GM10248 (cell line): ENCODE measurements at regions of chr12 and their contacts with region 1.

Region 1: GRCh38 chr12:46071769-46072624 is 81.6 kb upstream of the SCAF11 start:
- DNase-seq: peak; percentile 68
- CTCF ChIP-seq: peak; percentile 89

Region 2: GRCh38 chr12:46084666-46085631 is 13.0 kb after region 1 on chr12:
- CTCF ChIA-PET with region 1: interaction called, 18 read pairs
- POLR2A ChIA-PET with region 1: no interaction called
- DNase-seq: no peak
- CTCF ChIP-seq: no peak

Region 3: GRCh38 chr12:46523863-46524770 is 452.1 kb after region 1 on chr12:
- CTCF ChIA-PET with region 1: no interaction called
- POLR2A ChIA-PET with region 1: no interaction called
- DNase-seq: no peak
- CTCF ChIP-seq: no peak

Region 4: DNA sequence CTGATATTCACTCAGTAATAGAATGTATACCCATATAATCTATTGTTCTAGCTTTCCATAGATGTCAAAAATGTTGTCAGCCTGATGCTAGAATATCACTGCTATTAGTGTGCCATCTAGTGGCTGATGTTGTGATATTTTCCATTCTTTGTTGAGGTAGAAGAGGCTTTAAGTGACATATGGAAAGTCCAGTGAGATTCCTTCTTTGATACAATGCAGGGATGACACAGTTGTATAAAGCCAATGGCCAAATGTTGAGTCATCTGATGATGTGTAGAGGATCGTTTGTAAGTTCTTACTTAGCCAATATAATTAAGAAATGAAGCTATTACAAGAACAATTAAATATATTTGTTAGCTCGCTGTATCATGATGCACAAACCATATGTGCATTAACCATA is 949.3 kb after region 1 on chr12:
- CTCF ChIA-PET with region 1: interaction called, 21 read pairs
- POLR2A ChIA-PET with region 1: no interaction called
- DNase-seq: peak; percentile 27
- CTCF ChIP-seq: peak; percentile 70